Endothelial cell of umbilical vein (primary cell): ENCODE measurements at regions of chr7 and their contacts with region 1.

Region 1: DNA sequence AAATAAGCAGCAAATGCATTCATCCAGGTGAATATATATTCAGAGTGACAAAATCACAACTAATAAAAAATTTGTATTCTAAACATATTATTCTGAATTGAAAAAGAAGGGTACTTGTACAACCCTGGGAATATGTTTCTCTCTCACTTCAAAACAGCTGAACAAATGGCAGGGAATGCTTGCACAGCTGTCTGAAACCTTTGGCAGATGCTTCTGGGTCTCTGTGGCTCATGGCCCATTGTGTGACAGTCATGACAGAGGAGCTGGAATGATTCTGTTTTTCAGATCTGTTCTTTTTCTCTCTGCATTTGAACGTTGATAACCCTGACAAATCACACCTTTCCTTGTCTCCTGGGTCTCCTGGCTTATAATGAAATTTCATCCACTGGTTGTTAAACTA is 275.7 kb upstream of the FZD1 start:
- DNase-seq: no peak
- H3K4me3 ChIP-seq: no peak overlapping the region
- H3K27ac ChIP-seq: no peak overlapping the region
- H3K4me1 ChIP-seq: no peaks in the 10 kb centered on the region
- H3K27me3 ChIP-seq: no peaks in the 10 kb centered on the region
- CTCF ChIP-seq: no peak
- POLR2A ChIP-seq: no peak

Region 2: DNA sequence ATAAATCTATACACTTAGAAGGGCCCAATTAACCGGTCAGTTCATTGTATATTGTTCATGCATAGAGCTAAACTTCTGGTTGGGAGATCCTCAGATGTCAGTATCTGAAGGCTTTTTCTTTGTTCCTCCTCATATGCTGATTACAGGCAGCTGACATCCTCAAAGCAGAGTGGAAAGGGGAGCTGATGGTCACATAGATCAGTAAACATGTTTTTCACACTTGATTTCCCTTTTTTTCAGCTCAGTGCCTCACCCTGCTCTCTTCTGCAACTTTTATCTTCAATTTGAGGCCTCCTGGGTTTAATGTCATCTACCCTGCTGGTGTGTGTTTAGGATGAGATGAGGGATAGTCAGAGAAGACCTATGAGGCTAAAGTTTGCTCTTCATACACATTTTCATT is 22.2 kb before region 1 on chr7:
- CTCF ChIA-PET with region 1: no interaction called
- POLR2A ChIA-PET with region 1: no interaction called
- dilution Hi-C with region 1: no loop called
- intact Hi-C with region 1: no loop called
- DNase-seq: no peak
- H3K4me3 ChIP-seq: no peak overlapping the region
- H3K27ac ChIP-seq: no peak overlapping the region
- H3K4me1 ChIP-seq: no peaks in the 10 kb centered on the region
- H3K27me3 ChIP-seq: no peaks in the 10 kb centered on the region
- CTCF ChIP-seq: no peak
- POLR2A ChIP-seq: no peak

Region 3: GRCh38 chr7:91013078-91013477 is 24.6 kb after region 1 on chr7:
- CTCF ChIA-PET with region 1: no interaction called
- POLR2A ChIA-PET with region 1: interaction called, 11 read pairs
- dilution Hi-C with region 1: no loop called
- intact Hi-C with region 1: no loop called
- DNase-seq: no peak
- H3K4me3 ChIP-seq: no peak overlapping the region
- H3K27ac ChIP-seq: no peak overlapping the region
- H3K4me1 ChIP-seq: no peaks in the 10 kb centered on the region
- H3K27me3 ChIP-seq: no peaks in the 10 kb centered on the region
- CTCF ChIP-seq: no peak
- POLR2A ChIP-seq: no peak